ENCODE measurements at regions of chr15 and their contacts with region 1.

Region 1: GRCh38 chr15:40525855-40526254 is 39.0 kb downstream of the CCDC32 start:
- DNase-seq: no peak
- ATAC-seq: no peak
- H3K4me3 ChIP-seq: no peak overlapping the region
- H3K27ac ChIP-seq: no peak overlapping the region
- H3K4me1 ChIP-seq: no peaks in the 10 kb centered on the region
- H3K27me3 ChIP-seq: no peaks in the 10 kb centered on the region
- CTCF ChIP-seq: no peak
- POLR2A ChIP-seq: no peak

Region 2: DNA sequence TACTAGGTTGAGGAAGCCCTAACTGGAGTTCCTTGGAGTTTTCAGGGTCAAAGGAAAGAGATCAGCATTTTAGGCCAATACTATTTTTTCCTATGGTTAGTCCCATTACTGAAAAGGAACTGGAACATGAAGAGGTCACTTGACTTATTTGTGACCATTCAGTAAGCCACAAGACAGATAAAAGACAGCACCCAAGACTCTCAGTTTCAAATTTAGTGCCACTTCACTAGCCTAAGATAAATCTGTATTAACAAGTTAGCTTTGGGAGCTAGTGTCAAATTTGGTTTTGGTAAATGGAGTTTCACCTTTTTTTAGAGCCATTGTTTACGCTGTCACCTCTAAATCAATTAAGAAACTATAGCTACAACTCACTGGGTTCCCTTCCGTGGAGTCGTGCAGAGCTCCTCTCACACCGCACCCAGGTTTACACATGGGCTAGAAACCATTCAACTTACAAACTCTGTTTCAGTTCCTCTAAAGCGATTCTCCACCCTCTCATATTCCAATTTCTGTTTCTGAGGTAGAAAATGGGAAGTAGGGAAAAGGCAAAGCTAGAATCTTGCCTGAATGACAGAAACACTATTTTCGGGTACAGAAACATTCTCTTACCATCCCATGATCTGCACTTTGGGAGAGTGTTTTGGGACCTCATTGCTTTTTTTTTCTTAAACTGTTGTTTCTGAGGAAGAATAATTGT is 24.6 kb after region 1 on chr15:
- in situ Hi-C with region 1: no loop called
- intact Hi-C with region 1: loop called (anchors 2 kb)
- DNase-seq: no peak
- ATAC-seq: peak; percentile 12 to 54
- H3K4me3 ChIP-seq: no peak overlapping the region
- H3K27ac ChIP-seq: peak overlapping the region; percentile 90 to 94 (median 92)
- H3K4me1 ChIP-seq: peaks cover 69 to 74% of the 10 kb centered on the region in 2 donors
- H3K27me3 ChIP-seq: no peaks in the 10 kb centered on the region
- CTCF ChIP-seq: no peak
- POLR2A ChIP-seq: no peak

Region 3: GRCh38 chr15:41125931-41126642 is 600.2 kb after region 1 on chr15:
- in situ Hi-C with region 1: no loop called
- intact Hi-C with region 1: no loop called
- DNase-seq: no peak
- ATAC-seq: no peak
- H3K4me3 ChIP-seq: no peak overlapping the region
- H3K27ac ChIP-seq: no peak overlapping the region
- H3K4me1 ChIP-seq: no peaks in the 10 kb centered on the region
- H3K27me3 ChIP-seq: peaks cover 3 to 11% (median 5%) of the 10 kb centered on the region in 3 donors
- CTCF ChIP-seq: no peak
- POLR2A ChIP-seq: no peak

Region 4: GRCh38 chr15:41881920-41882688 is 1356.2 kb after region 1 on chr15:
- in situ Hi-C with region 1: no loop called
- intact Hi-C with region 1: no loop called
- DNase-seq: no peak
- ATAC-seq: peak in 1 of 2 donors; percentile 30
- H3K4me3 ChIP-seq: peak overlapping the region; percentile 34 to 46 (median 40)
- H3K27ac ChIP-seq: no peak overlapping the region
- H3K4me1 ChIP-seq: peaks cover 3 to 7% of the 10 kb centered on the region in 2 donors
- H3K27me3 ChIP-seq: no peaks in the 10 kb centered on the region
- CTCF ChIP-seq: no peak
- POLR2A ChIP-seq: no peak